ENCODE measurements at regions of chr10 and their contacts with region 1.

Region 1: GRCh38 chr10:96431211-96431970 is 72.6 kb upstream of the OPALIN start:
- DNase-seq: no peak
- ATAC-seq: no peak
- H3K4me3 ChIP-seq: no peak overlapping the region
- H3K4me3 Mint-ChIP-seq: no peak overlapping the region
- H3K27ac ChIP-seq: no peak overlapping the region
- H3K27ac Mint-ChIP-seq: no peak overlapping the region
- H3K4me1 ChIP-seq: no peaks in the 10 kb centered on the region
- H3K4me1 Mint-ChIP-seq: no peaks in the 10 kb centered on the region
- H3K27me3 ChIP-seq: peaks cover 0 to 14% of the 10 kb centered on the region in 2 experiments
- H3K27me3 Mint-ChIP-seq: peaks cover 22% of the 10 kb centered on the region
- CTCF ChIP-seq: no peak

Region 2: DNA sequence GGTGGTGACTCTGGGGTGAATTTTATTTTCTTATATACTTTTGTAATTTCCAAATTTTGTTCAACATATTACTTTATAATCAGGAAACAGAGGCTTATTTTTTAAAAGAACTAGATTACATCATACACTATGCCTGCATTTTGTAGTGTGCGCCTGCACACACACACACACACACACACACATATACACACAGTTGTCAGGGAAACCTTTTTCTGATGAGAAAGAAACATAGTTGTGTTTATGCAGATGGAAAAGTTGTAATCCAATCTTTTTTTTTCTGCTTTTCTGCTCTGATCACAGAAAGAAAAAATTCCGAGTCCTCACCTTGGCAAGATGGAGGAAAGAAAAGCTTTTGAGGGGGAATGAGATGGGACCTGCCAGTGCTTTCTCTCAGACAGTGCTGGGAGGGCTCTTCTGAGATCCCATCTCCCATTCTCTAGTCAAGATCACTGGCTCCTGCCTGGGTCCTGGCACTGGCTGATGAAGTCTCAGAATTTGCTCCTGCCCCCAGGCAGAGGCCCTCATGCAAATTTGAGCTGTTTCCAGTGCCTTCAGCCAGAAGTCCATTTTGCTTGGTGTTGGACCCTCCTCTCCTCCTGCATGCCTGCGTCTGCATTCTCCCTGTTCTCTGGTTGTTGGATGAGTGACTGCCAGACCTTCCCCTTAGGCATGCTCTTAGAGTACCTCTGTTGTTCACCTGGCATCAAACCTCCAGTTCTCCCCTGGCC is 22.6 kb after region 1 on chr10:
- CTCF ChIA-PET with region 1: no interaction called
- POLR2A ChIA-PET with region 1: no interaction called
- intact Hi-C with region 1: loop called in 1 of 2 experiments (anchors 1 kb)
- DNase-seq: no peak
- ATAC-seq: no peak
- H3K4me3 ChIP-seq: no peak overlapping the region
- H3K4me3 Mint-ChIP-seq: no peak overlapping the region
- H3K27ac ChIP-seq: no peak overlapping the region
- H3K27ac Mint-ChIP-seq: no peak overlapping the region
- H3K4me1 ChIP-seq: no peaks in the 10 kb centered on the region
- H3K4me1 Mint-ChIP-seq: no peaks in the 10 kb centered on the region
- H3K27me3 ChIP-seq: no peaks in the 10 kb centered on the region
- H3K27me3 Mint-ChIP-seq: peaks cover 14% of the 10 kb centered on the region
- CTCF ChIP-seq: no peak

Measured in CD4-positive, alpha-beta T cell (primary cell).